AG04449 (cell line): ENCODE measurements at regions of chr1 and their contacts with region 1.

Region 1: DNA sequence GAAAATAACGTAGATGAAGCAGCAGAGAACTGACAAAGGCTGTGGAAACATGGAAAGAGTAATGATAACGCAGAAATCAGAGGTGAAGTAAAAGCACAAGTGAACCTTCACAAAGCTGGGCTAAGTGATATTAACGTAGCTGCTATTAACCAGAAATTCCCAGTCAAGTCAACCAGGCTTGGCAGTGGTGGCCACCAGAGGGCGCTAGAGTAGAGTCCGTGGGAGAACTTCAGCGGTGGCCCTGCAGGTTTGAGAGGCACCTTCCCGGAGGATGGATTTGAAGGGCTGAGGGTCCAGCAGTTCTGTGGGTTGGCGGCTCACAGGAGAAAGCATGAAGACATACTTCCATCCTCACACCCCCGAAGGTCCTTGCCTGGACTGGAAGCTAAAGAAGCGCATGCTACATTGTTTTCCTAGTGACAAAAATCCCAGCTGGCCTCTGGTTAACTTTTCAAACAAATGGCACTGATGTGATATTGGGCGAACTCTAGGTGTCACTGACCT is 81.7 kb upstream of the ZNF648 start:
- DNase-seq: peak; percentile 16
- H3K4me3 ChIP-seq: no peak overlapping the region
- CTCF ChIP-seq: peak; percentile 88

Region 2: GRCh38 chr1:182084487-182085316 is 58.5 kb before region 1 on chr1:
- CTCF ChIA-PET with region 1: interaction called, 18 read pairs
- POLR2A ChIA-PET with region 1: no interaction called
- DNase-seq: no peak
- H3K4me3 ChIP-seq: no peak overlapping the region
- CTCF ChIP-seq: peak; percentile 80

Region 3: GRCh38 chr1:182120411-182121239 is 22.6 kb before region 1 on chr1:
- CTCF ChIA-PET with region 1: interaction called, 14 read pairs
- POLR2A ChIA-PET with region 1: no interaction called
- DNase-seq: no peak
- H3K4me3 ChIP-seq: no peak overlapping the region
- CTCF ChIP-seq: no peak

Region 4: DNA sequence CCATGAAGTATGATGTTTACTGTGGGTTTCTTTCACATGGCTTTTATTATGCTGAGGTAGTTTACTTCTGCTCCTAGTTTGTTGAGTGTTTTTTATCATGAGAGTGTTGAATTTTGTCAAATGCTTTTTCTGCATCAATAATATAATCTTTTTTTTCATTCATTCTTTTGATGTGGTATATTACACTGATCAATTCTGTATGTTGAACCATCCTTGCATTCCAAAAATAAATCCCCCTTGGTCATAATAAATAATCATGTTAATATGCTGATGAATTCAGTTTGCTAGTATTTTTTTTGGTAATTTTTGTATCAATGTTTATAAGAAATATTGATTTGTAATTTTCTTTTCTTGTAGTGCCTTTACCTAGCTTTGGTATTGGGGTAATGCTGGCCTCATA is 16.2 kb after region 1 on chr1:
- CTCF ChIA-PET with region 1: interaction called, 27 read pairs
- POLR2A ChIA-PET with region 1: no interaction called
- DNase-seq: no peak
- H3K4me3 ChIP-seq: no peak overlapping the region
- CTCF ChIP-seq: no peak

Region 5: GRCh38 chr1:182189535-182190066 is 46.4 kb after region 1 on chr1:
- CTCF ChIA-PET with region 1: interaction called, 10 read pairs
- POLR2A ChIA-PET with region 1: no interaction called
- DNase-seq: no peak
- H3K4me3 ChIP-seq: no peak overlapping the region
- CTCF ChIP-seq: no peak

Region 6: DNA sequence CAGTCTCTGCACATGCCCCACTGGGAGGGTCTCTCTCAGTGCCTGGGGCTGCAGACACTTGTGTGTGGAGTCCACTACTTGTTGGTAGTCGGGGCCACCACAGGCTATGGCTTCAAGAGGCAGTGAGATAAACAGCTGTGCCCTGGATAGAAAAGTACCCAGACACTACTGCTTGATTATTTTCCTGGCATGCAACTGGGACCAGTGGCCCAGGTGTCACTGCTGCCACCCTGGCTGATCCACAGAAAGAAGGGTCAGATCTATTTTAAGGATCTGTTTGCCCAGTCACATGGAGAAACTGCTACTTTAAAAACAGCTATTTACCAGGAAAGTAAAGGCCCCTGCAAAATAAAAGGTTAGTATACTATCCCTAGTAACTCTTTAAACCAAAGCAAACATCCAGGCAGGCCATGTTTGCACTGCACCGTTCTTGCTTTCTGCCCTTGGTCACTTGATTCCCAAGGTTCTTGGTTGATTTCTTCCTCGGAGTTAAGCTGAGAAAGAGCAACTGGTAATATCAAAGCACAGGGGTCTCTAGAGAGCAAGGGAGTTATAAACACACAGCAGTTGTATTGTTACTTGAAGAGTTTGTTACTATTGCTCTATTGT is 148.5 kb after region 1 on chr1:
- CTCF ChIA-PET with region 1: interaction called, 16 read pairs
- POLR2A ChIA-PET with region 1: interaction called, 5 read pairs
- DNase-seq: no peak
- H3K4me3 ChIP-seq: no peak overlapping the region
- CTCF ChIP-seq: no peak

Region 7: DNA sequence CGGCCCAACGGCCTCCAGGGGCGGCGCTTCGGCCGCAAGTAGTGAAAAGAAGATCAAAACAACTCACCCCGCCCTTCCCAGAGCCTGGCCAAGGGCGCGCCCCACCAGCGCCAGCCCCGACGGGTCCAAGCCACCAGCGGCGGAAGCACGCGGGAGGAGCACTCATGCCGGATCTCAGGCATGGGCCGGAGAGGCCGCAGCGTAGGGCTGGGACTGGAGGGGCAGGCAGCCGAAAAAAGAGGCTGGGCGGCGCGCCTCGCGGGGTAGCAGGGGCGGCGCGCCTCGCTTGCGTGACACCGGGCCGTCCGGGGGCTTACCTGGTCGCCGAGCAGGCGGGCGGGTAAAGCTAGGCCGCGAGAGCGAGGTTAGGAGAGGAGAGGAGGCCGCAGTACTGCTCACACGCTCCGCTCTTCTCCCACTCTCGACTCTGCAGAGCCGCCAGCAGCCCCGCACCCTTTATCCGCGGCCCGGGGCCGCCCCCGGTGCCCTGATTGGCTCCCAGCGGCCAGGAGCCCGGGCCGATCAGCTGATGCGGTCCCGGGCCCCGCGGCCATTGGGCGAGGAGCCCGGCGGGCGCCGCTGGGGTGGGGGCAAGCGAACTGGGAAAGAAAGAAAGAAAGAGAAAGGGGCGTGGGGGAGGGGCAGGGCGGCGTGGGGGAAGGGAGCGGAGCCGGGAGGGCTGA is 248.3 kb after region 1 on chr1 and contains the start of gene GLUL:
- CTCF ChIA-PET with region 1: interaction called, 504 read pairs
- POLR2A ChIA-PET with region 1: interaction called, 31 read pairs
- DNase-seq: peak; percentile 29
- H3K4me3 ChIP-seq: peak within 1 kb of the TSS; percentile 80
- CTCF ChIP-seq: no peak